ENCODE measurements at regions of chr6 and their contacts with region 1.

Region 1: GRCh38 chr6:43723737-43724295 is 36.2 kb upstream of the MRPS18A start:
- DNase-seq: peak; percentile 87
- ATAC-seq: peak; percentile 82
- H3K4me3 Mint-ChIP-seq: no peak overlapping the region
- H3K27ac Mint-ChIP-seq: peak overlapping the region; percentile 90
- H3K4me1 Mint-ChIP-seq: peaks cover 26% of the 10 kb centered on the region
- H3K27me3 Mint-ChIP-seq: no peaks in the 10 kb centered on the region

Region 2: DNA sequence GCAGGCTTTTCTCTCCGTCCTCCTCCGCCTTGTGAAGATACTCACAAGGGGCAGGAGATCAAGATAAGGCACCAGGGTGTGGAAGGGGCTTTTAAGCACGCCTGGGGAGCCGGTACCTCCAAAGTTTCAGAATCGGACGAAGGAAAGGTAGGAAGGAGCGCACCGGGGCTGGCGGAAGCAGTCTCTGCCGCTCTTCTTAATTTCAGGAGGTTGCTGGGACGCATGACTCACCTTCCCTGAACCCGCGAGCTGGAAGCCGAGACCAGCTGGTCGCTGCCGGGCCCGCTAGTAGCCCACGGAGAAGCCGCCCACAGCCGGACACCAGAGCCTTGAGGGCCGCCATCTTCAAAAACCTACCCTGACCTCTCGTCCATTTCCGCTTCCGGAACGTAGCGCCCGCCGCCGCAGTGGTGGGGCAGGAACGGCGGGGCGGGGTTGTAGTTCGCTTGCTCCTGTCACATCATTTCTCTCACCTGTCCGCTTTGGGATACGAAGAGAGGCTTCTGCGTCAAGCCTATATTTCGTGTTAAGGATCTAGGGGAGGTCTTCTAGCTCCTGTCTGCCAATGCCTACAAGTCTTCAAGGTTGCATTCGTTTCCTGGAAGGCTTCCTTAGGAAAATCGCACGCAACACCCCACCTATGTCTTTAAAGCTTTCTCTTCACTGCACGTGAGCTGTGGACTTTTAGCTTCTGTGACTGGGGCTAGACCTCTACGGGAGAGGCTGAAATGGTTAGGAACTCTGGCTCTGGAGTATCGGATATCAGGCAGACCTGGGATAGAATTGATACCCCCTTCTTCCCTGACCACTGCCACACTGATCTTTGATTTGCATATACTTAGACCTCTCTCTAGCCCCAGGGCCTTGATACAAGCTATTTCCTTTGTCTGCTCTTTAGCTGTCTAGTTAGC is 36.1 kb before region 1 on chr6 and contains the start of gene MRPS18A:
- CTCF ChIA-PET with region 1: interaction called, 4 read pairs
- POLR2A ChIA-PET with region 1: no interaction called
- intact Hi-C with region 1: loop called (anchors 2 to 5 kb)
- DNase-seq: peak; percentile 91
- ATAC-seq: peak; percentile 99
- H3K4me3 Mint-ChIP-seq: peak within 1 kb of the TSS; percentile 90
- H3K27ac Mint-ChIP-seq: peak within 1 kb of the TSS; percentile 89
- H3K4me1 Mint-ChIP-seq: peaks cover 40% of the 10 kb centered on the region
- H3K27me3 Mint-ChIP-seq: no peaks in the 10 kb centered on the region
- total RNA-seq, gene MRPS18A: 54.0 to 68.7 TPM

Region 3: GRCh38 chr6:43774776-43775534 is 51.1 kb after region 1 on chr6:
- CTCF ChIA-PET with region 1: interaction called, 14 read pairs
- POLR2A ChIA-PET with region 1: interaction called, 10 read pairs
- intact Hi-C with region 1: loop called (anchors 1 to 2 kb)
- DNase-seq: peak; percentile 81
- ATAC-seq: no peak
- H3K4me3 Mint-ChIP-seq: peak overlapping the region; percentile 16
- H3K27ac Mint-ChIP-seq: no peak overlapping the region
- H3K4me1 Mint-ChIP-seq: peaks cover 23% of the 10 kb centered on the region
- H3K27me3 Mint-ChIP-seq: peaks cover 4% of the 10 kb centered on the region

Region 4: GRCh38 chr6:43838276-43839036 is 114.6 kb after region 1 on chr6:
- CTCF ChIA-PET with region 1: no interaction called
- POLR2A ChIA-PET with region 1: no interaction called
- intact Hi-C with region 1: loop called in 1 of 2 experiments (anchors 5 kb)
- DNase-seq: peak; percentile 38
- ATAC-seq: peak; percentile 61
- H3K4me3 Mint-ChIP-seq: no peak overlapping the region
- H3K27ac Mint-ChIP-seq: no peak overlapping the region
- H3K4me1 Mint-ChIP-seq: no peaks in the 10 kb centered on the region
- H3K27me3 Mint-ChIP-seq: peaks cover 3% of the 10 kb centered on the region

Region 5: DNA sequence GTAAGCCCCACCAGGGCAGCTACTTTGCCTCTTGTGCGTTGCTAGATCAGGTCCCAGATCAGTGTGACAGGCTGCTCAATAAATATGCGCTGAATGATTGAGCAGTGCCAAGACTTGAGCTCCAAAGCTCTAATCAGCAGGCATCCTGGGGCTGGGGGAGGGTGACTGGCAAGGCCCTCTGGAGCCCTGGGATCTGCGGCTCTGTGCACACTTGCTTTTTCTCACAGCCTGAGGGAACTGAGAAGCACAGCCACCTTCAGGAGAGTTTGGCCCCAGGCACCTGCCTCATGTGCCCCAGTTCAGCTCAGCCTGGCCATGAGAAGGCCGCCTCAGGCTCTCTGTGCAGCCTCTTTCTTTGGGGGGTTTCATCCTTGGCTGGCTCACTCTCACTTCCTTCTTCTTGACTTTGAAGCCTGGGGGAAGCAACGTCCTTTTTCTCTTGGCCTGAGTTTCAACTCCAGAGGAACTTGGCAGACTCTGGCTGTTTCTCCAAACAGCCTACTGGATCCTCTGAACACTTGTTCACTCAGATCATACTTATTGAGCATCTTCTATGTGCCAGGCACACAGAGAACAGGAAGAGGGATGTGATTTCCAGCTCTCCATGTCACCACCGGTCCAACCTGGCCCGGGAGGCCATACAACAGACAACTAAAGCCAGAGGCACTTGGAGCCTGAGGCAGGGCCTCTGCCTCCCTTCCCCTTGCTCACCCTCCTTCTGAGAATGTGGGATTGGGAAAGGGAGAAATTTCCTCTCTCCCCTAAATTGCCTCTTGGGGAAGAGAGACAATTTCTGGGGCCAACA is 160.2 kb after region 1 on chr6:
- CTCF ChIA-PET with region 1: no interaction called
- POLR2A ChIA-PET with region 1: no interaction called
- intact Hi-C with region 1: no loop called
- DNase-seq: no peak
- ATAC-seq: no peak
- H3K4me3 Mint-ChIP-seq: no peak overlapping the region
- H3K27ac Mint-ChIP-seq: no peak overlapping the region
- H3K4me1 Mint-ChIP-seq: no peaks in the 10 kb centered on the region
- H3K27me3 Mint-ChIP-seq: no peaks in the 10 kb centered on the region

Region 6: GRCh38 chr6:44127186-44128019 is 403.6 kb after region 1 on chr6 and contains the starts of genes MRPL14 and TMEM63B:
- CTCF ChIA-PET with region 1: no interaction called
- POLR2A ChIA-PET with region 1: no interaction called
- intact Hi-C with region 1: no loop called
- DNase-seq: peak; percentile 95
- ATAC-seq: peak; percentile 81
- H3K4me3 Mint-ChIP-seq: peak within 1 kb of the TSS; percentile 82
- H3K27ac Mint-ChIP-seq: peak within 1 kb of the TSS; percentile 96
- H3K4me1 Mint-ChIP-seq: peaks cover 46% of the 10 kb centered on the region
- H3K27me3 Mint-ChIP-seq: no peaks in the 10 kb centered on the region
- total RNA-seq, gene MRPL14: 29.5 to 43.3 TPM
- total RNA-seq, gene TMEM63B: 10.9 to 15.2 TPM

Measured in activated CD4-positive, alpha-beta T cell treated with anti-CD3 and anti-CD28 coated beads for 36 hours (primary cell).